Thyroid gland (tissue), 4 donors: ENCODE measurements at regions of chr15 and their contacts with region 1.

Region 1: GRCh38 chr15:68154923-68155559 is 50.1 kb downstream of the CALML4 start:
- DNase-seq: peak; percentile 47 to 59
- H3K4me3 ChIP-seq: no peak overlapping the region
- H3K27ac ChIP-seq: peak overlapping the region in 1 of 3 donors; percentile 29
- H3K4me1 ChIP-seq: peaks cover 0 to 7% of the 10 kb centered on the region in 2 donors
- H3K27me3 ChIP-seq: no peaks in the 10 kb centered on the region
- CTCF ChIP-seq: peak; percentile 29 to 88 (median 76)
- POLR2A ChIP-seq: no peak

Region 2: GRCh38 chr15:67863442-67863987 is 291.5 kb before region 1 on chr15:
- intact Hi-C with region 1: loop called (anchors 5 kb)
- DNase-seq: peak; percentile 84
- H3K4me3 ChIP-seq: peak overlapping the region in 1 of 3 donors; percentile 18
- H3K27ac ChIP-seq: peak overlapping the region; percentile 63 to 71 (median 63)
- H3K4me1 ChIP-seq: peaks cover 11 to 22% of the 10 kb centered on the region in 2 donors
- H3K27me3 ChIP-seq: no peaks in the 10 kb centered on the region
- CTCF ChIP-seq: peak; percentile 79 to 97 (median 87)
- POLR2A ChIP-seq: peak in 1 of 2 donors; percentile 63

Region 3: DNA sequence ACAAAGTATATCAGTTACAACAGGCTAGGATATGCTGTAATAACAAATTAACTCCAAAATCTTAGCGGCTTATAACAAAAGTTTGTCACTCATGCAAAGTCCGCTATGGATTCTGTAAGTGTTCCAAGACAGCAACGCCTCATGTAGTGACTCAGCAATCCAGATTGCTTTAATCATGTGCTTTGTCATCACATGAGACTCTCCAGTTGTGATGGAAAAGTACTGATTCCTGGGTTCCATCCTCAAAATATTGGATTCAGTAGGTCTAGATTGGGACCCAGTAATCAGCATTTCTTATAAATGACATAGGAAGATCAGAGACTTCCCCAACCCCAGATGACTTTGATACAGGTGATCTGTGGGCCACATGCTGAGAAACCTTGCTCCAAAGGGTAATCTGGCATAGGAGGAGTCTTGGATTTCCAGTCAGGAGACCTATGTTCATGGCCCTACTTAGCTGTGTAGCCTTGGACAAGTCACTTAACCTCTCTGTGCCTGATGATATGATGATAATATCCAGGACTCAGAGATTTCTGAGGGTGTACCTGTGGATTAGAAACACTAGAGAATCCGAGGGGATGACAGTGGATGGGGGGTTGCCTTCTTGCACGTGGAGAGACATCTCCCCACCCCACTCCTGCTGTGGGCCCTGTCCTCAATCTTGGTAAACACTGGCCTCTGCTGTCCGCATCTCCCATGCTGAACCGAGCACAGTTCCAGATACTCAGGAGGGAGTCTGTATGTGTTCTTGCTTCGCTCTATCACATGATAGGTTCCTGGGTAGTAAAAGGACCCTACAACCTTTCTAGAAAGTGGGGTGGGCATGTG is 489.2 kb after region 1 on chr15:
- intact Hi-C with region 1: no loop called
- DNase-seq: no peak
- H3K4me3 ChIP-seq: no peak overlapping the region
- H3K27ac ChIP-seq: no peak overlapping the region
- H3K4me1 ChIP-seq: peaks cover 0 to 16% of the 10 kb centered on the region in 2 donors
- H3K27me3 ChIP-seq: no peaks in the 10 kb centered on the region
- CTCF ChIP-seq: no peak
- POLR2A ChIP-seq: no peak